ENCODE measurements at regions of chr2 and their contacts with region 1.

Region 1: DNA sequence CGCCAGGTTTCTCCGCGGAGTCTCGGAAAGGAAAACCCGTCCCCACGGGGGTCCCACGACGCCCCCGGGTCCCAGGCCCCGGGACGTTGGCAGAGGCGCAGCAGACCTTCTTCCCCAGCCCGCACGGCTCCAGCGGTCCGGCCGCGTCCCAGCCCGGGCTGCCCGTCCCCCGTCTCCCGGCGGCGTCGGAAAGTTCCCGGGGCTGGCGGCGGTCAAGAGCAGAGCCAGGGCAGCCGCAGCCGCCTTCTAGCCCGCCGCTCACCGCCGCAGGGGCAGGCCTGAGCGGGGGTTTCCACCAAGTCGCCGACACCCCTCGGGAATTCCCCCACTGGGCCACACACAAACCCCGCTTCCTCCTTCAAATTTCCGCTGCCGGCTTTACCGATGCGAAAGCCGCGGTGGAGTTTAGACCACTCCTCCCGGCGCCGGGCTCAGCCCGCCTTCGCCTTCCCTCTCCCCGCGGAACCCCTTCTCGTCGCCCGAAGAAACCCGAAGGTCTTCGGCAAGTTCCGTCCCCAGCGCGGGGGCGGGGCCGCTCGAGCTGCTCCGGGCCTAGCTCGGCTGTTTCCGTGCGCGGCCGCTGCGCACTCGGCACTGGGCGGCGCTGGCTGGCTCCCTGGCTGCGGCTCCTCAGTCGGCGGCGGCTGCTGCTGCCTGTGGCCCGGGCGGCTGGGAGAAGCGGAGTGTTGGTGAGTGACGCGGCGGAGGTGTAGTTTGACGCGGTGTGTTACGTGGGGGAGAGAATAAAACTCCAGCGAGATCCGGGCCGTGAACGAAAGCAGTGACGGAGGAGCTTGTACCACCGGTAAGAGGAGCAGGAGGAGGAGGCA is at the start of gene CREB1:
- DNase-seq: peak; percentile 100
- ATAC-seq: peak; percentile 80
- H3K4me3 Mint-ChIP-seq: peak within 1 kb of the TSS; percentile 95
- H3K27ac Mint-ChIP-seq: peak within 1 kb of the TSS; percentile 100
- H3K4me1 Mint-ChIP-seq: peaks cover 74% of the 10 kb centered on the region
- H3K27me3 Mint-ChIP-seq: no peaks in the 10 kb centered on the region
- CTCF ChIP-seq: no peak
- total RNA-seq, gene CREB1: 112 and 127 TPM in 2 replicates

Region 2: GRCh38 chr2:205714058-205714776 is 1815.3 kb before region 1 on chr2:
- CTCF ChIA-PET with region 1: no interaction called
- POLR2A ChIA-PET with region 1: no interaction called
- intact Hi-C with region 1: loop called (anchors 10 kb)
- DNase-seq: no peak
- ATAC-seq: peak; percentile 81
- H3K4me3 Mint-ChIP-seq: peak overlapping the region; percentile 37
- H3K27ac Mint-ChIP-seq: peak overlapping the region; percentile 74
- H3K4me1 Mint-ChIP-seq: peaks cover 61% of the 10 kb centered on the region
- H3K27me3 Mint-ChIP-seq: no peaks in the 10 kb centered on the region
- CTCF ChIP-seq: no peak

Region 3: GRCh38 chr2:207143215-207144172 is 386.1 kb before region 1 on chr2:
- CTCF ChIA-PET with region 1: interaction called, 3 read pairs
- POLR2A ChIA-PET with region 1: interaction called, 19 read pairs
- intact Hi-C with region 1: loop called (anchors 2 kb)
- DNase-seq: peak; percentile 34
- ATAC-seq: peak; percentile 65
- H3K4me3 Mint-ChIP-seq: peak overlapping the region; percentile 52
- H3K27ac Mint-ChIP-seq: peak overlapping the region; percentile 92
- H3K4me1 Mint-ChIP-seq: peaks cover 61% of the 10 kb centered on the region
- H3K27me3 Mint-ChIP-seq: no peaks in the 10 kb centered on the region
- CTCF ChIP-seq: no peak

Region 4: GRCh38 chr2:207503234-207503633 is 26.3 kb before region 1 on chr2:
- CTCF ChIA-PET with region 1: interaction called, 4 read pairs
- POLR2A ChIA-PET with region 1: interaction called, 128 read pairs
- intact Hi-C with region 1: loop called (anchors 1 kb)
- DNase-seq: no peak
- ATAC-seq: peak; percentile 71
- H3K4me3 Mint-ChIP-seq: peak overlapping the region; percentile 42
- H3K27ac Mint-ChIP-seq: peak overlapping the region; percentile 85
- H3K4me1 Mint-ChIP-seq: peaks cover 83% of the 10 kb centered on the region
- H3K27me3 Mint-ChIP-seq: no peaks in the 10 kb centered on the region
- CTCF ChIP-seq: no peak

Region 5: GRCh38 chr2:207600231-207600630 is 70.7 kb after region 1 on chr2:
- CTCF ChIA-PET with region 1: interaction called, 3 read pairs
- POLR2A ChIA-PET with region 1: interaction called, 10 read pairs
- intact Hi-C with region 1: no loop called
- DNase-seq: no peak
- ATAC-seq: no peak
- H3K4me3 Mint-ChIP-seq: no peak overlapping the region
- H3K27ac Mint-ChIP-seq: no peak overlapping the region
- H3K4me1 Mint-ChIP-seq: peaks cover 13% of the 10 kb centered on the region
- H3K27me3 Mint-ChIP-seq: no peaks in the 10 kb centered on the region
- CTCF ChIP-seq: no peak

Region 6: DNA sequence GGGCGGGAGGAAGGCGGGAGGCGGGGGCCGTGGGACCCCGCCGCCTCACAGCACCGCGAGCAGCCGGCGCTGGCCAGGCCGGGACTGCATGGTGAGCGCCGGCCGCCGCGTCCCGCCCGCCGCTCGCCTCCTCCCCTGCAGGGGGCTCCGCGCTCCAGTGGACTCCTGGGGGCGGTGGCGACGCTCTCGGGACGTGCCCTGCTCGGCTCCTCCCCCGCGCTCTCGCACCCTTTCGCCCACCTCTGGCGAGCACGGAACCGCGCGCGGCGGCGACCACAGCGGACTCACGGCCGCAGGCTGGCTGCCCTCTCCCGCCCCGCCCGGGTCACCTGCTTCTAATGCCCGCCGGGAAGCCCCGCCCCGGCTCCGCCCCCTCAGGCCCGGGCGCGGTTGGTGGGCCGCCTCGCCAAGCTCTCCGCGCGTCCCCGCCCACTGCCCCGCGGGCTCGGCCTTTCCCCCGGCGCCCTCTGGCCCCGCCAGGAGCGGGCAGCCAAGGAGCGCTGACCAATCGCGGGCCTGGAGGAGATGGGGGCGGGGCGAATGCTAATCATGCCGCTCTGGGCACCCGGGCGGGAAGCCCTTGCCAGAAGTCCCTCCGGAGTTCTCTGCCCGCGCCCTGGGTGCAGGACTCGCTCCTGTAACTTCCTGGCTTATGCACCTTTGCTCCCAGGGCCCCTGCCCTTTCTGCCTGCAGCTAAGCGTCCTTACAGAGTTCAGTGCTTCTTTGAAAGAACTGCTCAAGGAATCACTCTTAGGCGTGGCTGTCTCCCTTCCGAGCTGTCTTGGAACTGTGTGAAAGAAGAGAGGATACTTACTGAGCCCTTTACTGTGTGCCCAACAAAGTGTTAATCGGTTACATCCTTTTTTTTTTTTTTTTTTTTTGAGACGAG is 240.3 kb after region 1 on chr2 and contains the start of gene FZD5:
- CTCF ChIA-PET with region 1: interaction called, 3 read pairs
- POLR2A ChIA-PET with region 1: interaction called, 5 read pairs
- intact Hi-C with region 1: loop called (anchors 1 kb)
- DNase-seq: peak; percentile 93
- ATAC-seq: peak; percentile 91
- H3K4me3 Mint-ChIP-seq: peak within 1 kb of the TSS; percentile 87
- H3K27ac Mint-ChIP-seq: no peak within 1 kb of the TSS
- H3K4me1 Mint-ChIP-seq: peaks cover 36% of the 10 kb centered on the region
- H3K27me3 Mint-ChIP-seq: peaks cover 7% of the 10 kb centered on the region
- CTCF ChIP-seq: no peak
- total RNA-seq, gene FZD5: 0.66 and 0.89 TPM in 2 replicates

Region 7: DNA sequence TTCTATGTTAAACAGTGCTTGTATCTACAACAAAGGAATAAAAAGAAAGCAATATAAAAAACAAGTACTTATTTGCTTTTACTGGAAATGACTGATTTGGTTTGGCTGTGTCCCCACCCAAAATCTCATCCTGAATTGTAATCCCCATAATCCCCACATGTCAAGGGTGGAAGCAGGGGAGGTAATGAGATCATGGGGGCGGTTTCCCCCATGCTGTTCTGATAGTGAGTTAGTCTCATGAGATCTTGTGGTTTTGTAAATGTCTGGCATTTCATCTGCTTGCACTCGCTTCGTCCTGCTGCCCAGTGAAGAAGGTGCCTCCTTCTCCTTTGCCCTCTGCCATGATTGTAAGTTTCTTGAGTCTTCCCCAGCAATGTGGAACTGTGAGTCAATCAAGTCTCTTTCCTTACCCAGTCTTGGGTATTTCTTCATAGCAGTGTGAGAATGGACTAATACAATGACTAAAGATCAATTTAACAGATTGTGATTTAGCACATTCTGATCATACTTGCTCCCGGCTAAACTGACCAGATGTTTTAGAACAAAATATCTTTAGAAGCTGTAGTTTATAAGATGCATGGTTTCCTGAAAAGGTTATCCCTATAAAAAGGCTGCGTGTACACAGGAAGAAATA is 897.0 kb after region 1 on chr2:
- CTCF ChIA-PET with region 1: no interaction called
- POLR2A ChIA-PET with region 1: no interaction called
- intact Hi-C with region 1: no loop called
- DNase-seq: no peak
- ATAC-seq: no peak
- H3K4me3 Mint-ChIP-seq: no peak overlapping the region
- H3K27ac Mint-ChIP-seq: no peak overlapping the region
- H3K4me1 Mint-ChIP-seq: no peaks in the 10 kb centered on the region
- H3K27me3 Mint-ChIP-seq: peaks cover 17% of the 10 kb centered on the region
- CTCF ChIP-seq: no peak

Measured in activated B cell treated with CpG ODN at 0.5 μM for 24 hours (primary cell).